ENCODE measurements at regions of chr1 and their contacts with region 1.

Region 1: GRCh38 chr1:41662061-41662764 is 177.7 kb upstream of the EDN2 start:
- DNase-seq: peak in 1 of 2 donors; percentile 43
- ATAC-seq: peak; percentile 63 to 66
- H3K4me3 ChIP-seq: peak overlapping the region; percentile 60 to 74 (median 62)
- H3K27ac ChIP-seq: peak overlapping the region; percentile 80 to 88 (median 84)
- H3K4me1 ChIP-seq: peaks cover 14 to 27% of the 10 kb centered on the region in 2 donors
- H3K27me3 ChIP-seq: no peaks in the 10 kb centered on the region
- CTCF ChIP-seq: no peak
- POLR2A ChIP-seq: peak; percentile 61 to 76

Region 2: DNA sequence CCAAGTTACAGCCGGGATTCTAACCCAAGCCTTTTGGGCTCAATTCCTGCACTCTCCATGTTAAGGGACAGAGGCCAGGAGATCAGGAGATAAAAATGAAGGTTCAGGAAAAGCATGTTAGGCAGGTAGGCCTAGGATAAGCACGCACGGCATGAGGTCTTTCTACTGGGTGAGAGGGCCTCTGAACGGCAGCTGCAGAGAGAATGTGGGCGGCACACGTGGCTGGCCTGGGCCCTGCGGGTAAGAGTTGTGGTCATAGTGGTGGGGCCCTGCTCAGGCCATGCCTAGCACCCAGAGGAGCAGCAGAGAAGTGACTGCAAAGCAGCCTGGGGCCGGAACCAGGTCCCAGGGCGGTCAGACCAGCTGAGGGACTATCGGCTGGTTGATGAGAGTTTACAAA is 308.5 kb before region 1 on chr1:
- in situ Hi-C with region 1: no loop called
- intact Hi-C with region 1: loop called (anchors 10 kb)
- DNase-seq: no peak
- ATAC-seq: no peak
- H3K4me3 ChIP-seq: no peak overlapping the region
- H3K27ac ChIP-seq: no peak overlapping the region
- H3K4me1 ChIP-seq: peaks cover 19% of the 10 kb centered on the region in 2 donors
- H3K27me3 ChIP-seq: no peaks in the 10 kb centered on the region
- CTCF ChIP-seq: no peak
- POLR2A ChIP-seq: no peak

Region 3: GRCh38 chr1:41496080-41497055 is 165.8 kb before region 1 on chr1:
- in situ Hi-C with region 1: no loop called
- intact Hi-C with region 1: loop called (anchors 5 kb)
- DNase-seq: peak; percentile 90 to 94
- ATAC-seq: peak; percentile 55 to 63
- H3K4me3 ChIP-seq: peak overlapping the region; percentile 38 to 54 (median 42)
- H3K27ac ChIP-seq: peak overlapping the region; percentile 88 to 93 (median 90)
- H3K4me1 ChIP-seq: peaks cover 48 to 49% of the 10 kb centered on the region in 2 donors
- H3K27me3 ChIP-seq: no peaks in the 10 kb centered on the region
- CTCF ChIP-seq: peak in 3 of 5 experiments; percentile 14 to 49 (median 42)
- POLR2A ChIP-seq: peak; percentile 81 to 83

Region 4: DNA sequence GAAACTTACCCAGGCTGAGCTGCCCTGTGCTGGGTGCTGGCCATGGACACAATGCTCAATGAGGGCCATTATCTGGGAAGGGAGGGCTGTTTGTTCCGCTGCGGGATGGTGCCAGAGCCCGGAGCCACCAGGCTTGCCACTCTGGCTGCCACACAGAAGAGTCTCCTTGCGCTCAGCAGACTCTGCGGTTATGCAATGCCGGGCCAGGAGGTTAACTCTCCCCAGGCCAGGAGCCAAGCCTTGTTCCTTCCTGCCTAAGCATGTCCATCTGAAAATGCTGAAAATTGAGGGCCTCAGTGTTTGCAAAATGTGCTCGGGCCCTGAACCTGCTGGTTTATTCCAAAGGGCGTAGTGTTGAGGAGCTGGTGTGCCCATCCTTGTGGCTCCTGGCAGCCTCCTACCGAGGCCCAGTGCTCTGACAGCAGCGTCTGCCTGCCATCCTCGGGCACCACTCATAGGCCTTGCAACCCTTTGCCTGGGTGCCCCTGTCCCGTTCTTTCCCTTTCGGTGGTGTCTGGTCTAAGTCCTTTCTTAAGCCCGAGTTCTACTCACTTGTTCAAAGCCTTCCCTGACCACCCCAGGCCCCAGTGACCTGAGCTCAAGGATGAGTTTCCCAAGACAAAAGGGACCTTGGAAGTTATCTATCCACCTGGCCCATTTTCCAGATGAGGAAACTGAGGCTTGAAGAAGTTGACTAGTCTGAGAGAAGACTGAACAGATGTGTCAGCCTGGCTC is 44.0 kb before region 1 on chr1:
- in situ Hi-C with region 1: no loop called
- intact Hi-C with region 1: loop called (anchors 5 kb)
- DNase-seq: peak; percentile 91 to 93
- ATAC-seq: peak; percentile 97 to 99
- H3K4me3 ChIP-seq: no peak overlapping the region
- H3K27ac ChIP-seq: peak overlapping the region; percentile 59 to 76 (median 64)
- H3K4me1 ChIP-seq: peaks cover 14 to 15% of the 10 kb centered on the region in 2 donors
- H3K27me3 ChIP-seq: no peaks in the 10 kb centered on the region
- CTCF ChIP-seq: no peak
- POLR2A ChIP-seq: no peak

Region 5: GRCh38 chr1:41773144-41773591 is 111.0 kb after region 1 on chr1:
- in situ Hi-C with region 1: no loop called
- intact Hi-C with region 1: loop called (anchors 5 kb)
- DNase-seq: peak; percentile 30 to 49
- ATAC-seq: peak in 1 of 2 donors; percentile 18
- H3K4me3 ChIP-seq: no peak overlapping the region
- H3K27ac ChIP-seq: peak overlapping the region in 2 of 4 donors; percentile 71 to 84
- H3K4me1 ChIP-seq: peaks cover 17 to 41% of the 10 kb centered on the region in 2 donors
- H3K27me3 ChIP-seq: no peaks in the 10 kb centered on the region
- CTCF ChIP-seq: no peak
- POLR2A ChIP-seq: no peak